ENCODE measurements at regions of chr13 and their contacts with region 1.

Region 1: DNA sequence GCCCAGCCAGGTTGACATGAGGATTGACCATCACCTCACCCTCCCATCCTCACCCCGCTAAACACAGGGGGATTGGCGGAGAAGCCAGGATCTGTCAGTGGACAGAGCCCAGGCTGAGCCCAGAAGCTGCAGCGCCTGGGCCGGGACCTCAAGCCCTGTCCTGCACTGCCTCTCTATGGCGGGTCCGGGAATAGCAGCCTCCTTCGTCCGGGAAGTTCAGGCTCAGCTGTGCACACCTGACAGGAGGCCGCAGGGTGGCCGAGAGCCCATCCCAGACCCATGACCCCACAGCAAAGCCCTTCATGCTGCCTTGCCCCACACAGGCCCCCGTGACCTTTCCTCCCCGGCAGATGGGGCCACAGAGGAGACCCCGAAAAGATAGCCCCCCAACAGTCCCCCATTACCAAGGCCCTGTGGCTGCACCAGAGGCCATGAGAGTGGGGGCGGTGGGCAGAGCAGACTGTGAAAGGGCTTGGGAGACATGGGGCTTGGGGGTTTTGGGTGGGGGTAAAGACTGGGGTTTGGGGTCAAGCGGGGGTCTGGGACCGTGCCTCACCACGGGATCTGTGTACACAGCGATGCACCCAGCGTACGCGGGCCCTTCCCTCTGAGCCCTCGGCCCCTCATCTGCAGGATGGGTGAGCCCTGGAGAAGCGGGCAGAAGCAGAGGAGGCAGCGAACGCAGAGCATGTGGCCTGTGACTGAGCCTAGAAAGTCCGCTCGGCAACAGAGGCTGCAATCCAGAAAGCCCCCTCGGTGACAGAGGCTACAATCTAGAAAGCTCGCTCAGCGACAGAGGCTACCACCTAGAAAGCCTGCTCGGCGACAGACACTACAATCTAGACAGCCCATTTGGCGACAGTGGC is 68.1 kb downstream of the SPACA7 start:
- DNase-seq: peak; percentile 73
- H3K4me3 ChIP-seq: no peak overlapping the region
- H3K27ac ChIP-seq: no peak overlapping the region
- H3K4me1 ChIP-seq: no peaks in the 10 kb centered on the region
- H3K27me3 ChIP-seq: peaks cover 12% of the 10 kb centered on the region
- CTCF ChIP-seq: peak; percentile 89

Region 2: GRCh38 chr13:111474136-111475002 is 969.9 kb before region 1 on chr13:
- CTCF ChIA-PET with region 1: interaction called, 8 read pairs
- POLR2A ChIA-PET with region 1: no interaction called
- intact Hi-C with region 1: loop called (anchors 2 kb)
- DNase-seq: peak; percentile 70
- H3K4me3 ChIP-seq: no peak overlapping the region
- H3K27ac ChIP-seq: no peak overlapping the region
- H3K4me1 ChIP-seq: no peaks in the 10 kb centered on the region
- H3K27me3 ChIP-seq: peaks cover 11% of the 10 kb centered on the region
- CTCF ChIP-seq: peak; percentile 59

Region 3: GRCh38 chr13:111505175-111505777 is 939.0 kb before region 1 on chr13:
- CTCF ChIA-PET with region 1: interaction called, 7 read pairs
- POLR2A ChIA-PET with region 1: no interaction called
- intact Hi-C with region 1: loop called (anchors 1 kb)
- DNase-seq: peak; percentile 49
- H3K4me3 ChIP-seq: no peak overlapping the region
- H3K27ac ChIP-seq: no peak overlapping the region
- H3K4me1 ChIP-seq: no peaks in the 10 kb centered on the region
- H3K27me3 ChIP-seq: peaks cover 19% of the 10 kb centered on the region
- CTCF ChIP-seq: peak; percentile 65

Region 4: DNA sequence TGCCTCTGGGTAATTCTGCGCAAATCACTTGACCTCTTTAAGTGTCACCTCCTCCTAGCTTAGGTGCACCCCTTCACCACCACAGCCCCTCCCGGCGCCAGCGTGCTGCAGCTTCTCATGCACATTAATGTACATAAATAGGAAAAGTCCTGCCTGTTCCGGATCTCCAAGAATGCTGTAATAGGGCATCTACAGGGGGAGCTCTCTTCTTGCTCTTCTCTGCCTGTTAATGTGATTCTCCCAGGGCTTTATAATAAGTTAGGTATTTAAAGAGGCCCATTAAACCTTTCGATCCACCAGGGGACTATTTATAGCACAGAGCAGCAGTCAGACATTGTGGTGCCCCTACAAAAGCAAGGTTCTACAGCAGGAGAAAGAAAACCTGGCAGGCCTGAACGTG is 342.0 kb before region 1 on chr13:
- CTCF ChIA-PET with region 1: interaction called, 6 read pairs
- POLR2A ChIA-PET with region 1: no interaction called
- intact Hi-C with region 1: loop called (anchors 5 kb)
- DNase-seq: peak; percentile 81
- H3K4me3 ChIP-seq: no peak overlapping the region
- H3K27ac ChIP-seq: peak overlapping the region; percentile 53
- H3K4me1 ChIP-seq: peaks cover 62% of the 10 kb centered on the region
- H3K27me3 ChIP-seq: peaks cover 18% of the 10 kb centered on the region
- CTCF ChIP-seq: peak; percentile 66

Region 5: DNA sequence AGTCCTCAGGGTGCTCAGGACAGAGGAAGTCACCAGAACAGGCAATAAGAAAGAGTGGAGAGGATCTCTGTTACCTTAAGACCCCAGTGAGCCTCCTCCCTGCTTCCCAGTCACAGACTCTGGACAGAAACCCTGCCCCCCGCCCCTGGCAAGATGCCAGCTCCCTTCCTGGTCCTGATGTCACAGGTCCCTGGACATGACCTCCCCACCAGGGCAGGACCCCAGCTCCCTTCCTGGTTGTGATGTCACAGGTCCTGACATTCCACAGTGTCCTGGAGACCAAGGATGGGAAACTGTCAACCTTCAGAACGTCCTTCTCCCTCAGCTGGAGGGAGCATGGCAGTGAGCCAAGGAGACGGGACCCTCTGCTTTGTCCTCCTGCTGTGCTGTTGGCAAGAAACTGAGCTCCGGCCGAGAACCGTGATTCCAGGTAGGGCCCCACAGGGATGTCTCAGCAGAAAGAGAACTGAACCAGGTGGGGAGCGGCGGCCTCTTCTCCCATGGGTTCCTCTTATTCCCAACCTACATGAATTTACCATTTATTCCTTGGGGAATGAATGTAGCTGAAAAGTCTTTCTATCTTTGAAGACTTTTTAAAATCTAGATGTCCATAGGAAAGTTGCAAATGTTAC is 68.1 kb before region 1 on chr13 and contains the start of gene SPACA7:
- CTCF ChIA-PET with region 1: no interaction called
- POLR2A ChIA-PET with region 1: no interaction called
- intact Hi-C with region 1: no loop called
- DNase-seq: no peak
- H3K4me3 ChIP-seq: no peak within 1 kb of the TSS
- H3K27ac ChIP-seq: no peak within 1 kb of the TSS
- H3K4me1 ChIP-seq: no peaks in the 10 kb centered on the region
- H3K27me3 ChIP-seq: peaks cover 11% of the 10 kb centered on the region
- CTCF ChIP-seq: no peak
- total RNA-seq, gene SPACA7: not detected in 2 replicates

Region 6: GRCh38 chr13:112606109-112607001 is 162.1 kb after region 1 on chr13:
- CTCF ChIA-PET with region 1: no interaction called
- POLR2A ChIA-PET with region 1: no interaction called
- intact Hi-C with region 1: loop called (anchors 2 kb)
- DNase-seq: peak; percentile 94
- H3K4me3 ChIP-seq: peak overlapping the region; percentile 41
- H3K27ac ChIP-seq: peak overlapping the region; percentile 20
- H3K4me1 ChIP-seq: no peaks in the 10 kb centered on the region
- H3K27me3 ChIP-seq: peaks cover 12% of the 10 kb centered on the region
- CTCF ChIP-seq: peak; percentile 90